ENCODE measurements at regions of chr3 and their contacts with region 1.

Region 1: DNA sequence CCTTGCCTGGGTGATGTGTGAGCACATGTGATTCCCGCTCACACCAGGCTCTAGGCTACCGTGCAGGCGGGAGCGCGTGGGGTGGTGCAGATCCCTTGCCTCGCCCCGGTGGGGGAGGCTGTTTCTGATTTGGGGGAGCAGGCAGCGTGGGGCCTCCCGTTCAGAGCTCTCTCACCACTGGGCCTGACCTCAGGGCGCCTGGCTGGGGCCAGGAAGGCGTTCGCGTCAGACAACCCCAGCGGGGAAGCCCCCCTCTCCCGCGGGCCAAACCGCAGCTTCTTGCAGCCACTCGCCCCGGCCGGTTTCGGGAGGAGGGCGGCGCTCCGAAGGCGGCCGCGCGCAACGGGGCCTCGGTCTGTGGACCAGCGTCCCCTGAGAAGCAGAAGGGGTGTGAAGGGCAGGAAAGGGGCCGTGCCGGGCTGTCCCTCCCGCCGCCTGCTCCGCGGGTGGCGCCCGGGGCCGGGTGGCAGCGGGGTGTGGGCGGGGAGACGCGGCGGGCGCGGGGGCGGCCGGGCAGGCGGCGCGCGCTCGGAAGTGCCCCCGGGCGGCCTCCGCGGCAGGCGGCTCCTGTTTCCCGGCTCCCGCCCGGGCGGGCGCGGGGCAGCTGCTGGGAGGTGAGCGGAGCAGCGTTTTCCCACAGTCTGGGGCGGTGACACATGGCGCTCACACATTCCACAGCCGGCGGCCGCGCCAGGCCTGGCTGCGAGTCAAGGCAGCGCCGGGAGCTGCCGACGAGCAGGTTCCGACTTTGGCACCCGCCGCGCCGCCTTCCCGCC is 65.1 kb upstream of the HES1 start:
- DNase-seq: peak; percentile 88
- H3K4me3 ChIP-seq: peak overlapping the region; percentile 37 to 64 (median 56)
- H3K27ac ChIP-seq: peak overlapping the region; percentile 80 to 85 (median 82)
- H3K4me1 ChIP-seq: peaks cover 0 to 18% (median 16%) of the 10 kb centered on the region in 4 donors
- H3K27me3 ChIP-seq: no peaks in the 10 kb centered on the region
- CTCF ChIP-seq: no peak
- EP300 ChIP-seq: no peak
- POLR2A ChIP-seq: no peak

Region 2: DNA sequence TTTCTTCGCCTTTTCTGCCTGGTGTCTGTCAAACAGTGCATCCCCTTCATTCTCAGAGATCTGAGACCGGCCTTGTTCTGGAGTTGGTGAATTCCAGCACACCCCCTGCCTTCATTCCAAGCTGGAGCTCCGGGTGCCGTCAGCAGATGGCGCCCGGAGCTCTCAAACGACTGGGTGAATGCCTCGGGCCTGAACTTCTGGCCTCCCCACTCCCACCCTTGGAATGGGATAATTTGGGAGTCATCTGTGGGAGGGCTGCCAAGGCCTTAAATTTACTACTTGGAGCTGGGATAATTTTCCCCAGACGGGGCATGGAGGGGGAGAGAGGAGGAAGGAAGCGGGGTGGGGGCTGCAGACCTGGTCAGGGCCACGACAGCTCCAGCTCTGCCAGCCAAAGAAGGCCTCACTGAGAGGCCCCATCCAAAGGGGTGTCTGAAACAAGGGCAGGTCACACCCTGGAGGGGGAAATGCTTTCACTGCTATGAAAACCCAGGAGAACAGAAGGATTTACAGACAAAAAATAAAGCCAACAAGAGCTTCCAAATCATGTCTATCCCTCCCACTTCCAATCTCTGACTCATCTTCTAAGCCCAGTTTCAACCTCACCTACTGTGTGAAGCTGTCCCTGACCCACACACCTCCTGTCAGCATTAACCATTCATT is 289.9 kb before region 1 on chr3:
- intact Hi-C with region 1: loop called (anchors 5 kb)
- DNase-seq: peak; percentile 88
- H3K4me3 ChIP-seq: no peak overlapping the region
- H3K27ac ChIP-seq: peak overlapping the region; percentile 30 to 68 (median 53)
- H3K4me1 ChIP-seq: peaks cover 0 to 16% (median 12%) of the 10 kb centered on the region in 4 donors
- H3K27me3 ChIP-seq: no peaks in the 10 kb centered on the region
- CTCF ChIP-seq: peak; percentile 70 to 89 (median 80)
- EP300 ChIP-seq: no peak
- POLR2A ChIP-seq: no peak

Region 3: GRCh38 chr3:194265483-194265892 is 194.7 kb after region 1 on chr3:
- intact Hi-C with region 1: loop called (anchors 5 kb)
- DNase-seq: peak; percentile 98
- H3K4me3 ChIP-seq: peak overlapping the region in 1 of 4 donors; percentile 14
- H3K27ac ChIP-seq: peak overlapping the region; percentile 61 to 92 (median 80)
- H3K4me1 ChIP-seq: peaks cover 0 to 36% (median 34%) of the 10 kb centered on the region in 4 donors
- H3K27me3 ChIP-seq: no peaks in the 10 kb centered on the region
- CTCF ChIP-seq: no peak
- EP300 ChIP-seq: peak in 3 of 4 donors; percentile 61 to 71 (median 69)
- POLR2A ChIP-seq: no peak

Measured in sigmoid colon (tissue), 7 donors.